Mammary epithelial cell (primary cell): ENCODE measurements at regions of chr12 and their contacts with region 1.

Region 1: GRCh38 chr12:12376646-12377448 is 20.0 kb downstream of the BORCS5 start:
- DNase-seq: peak; percentile 68
- H3K4me3 ChIP-seq: no peak overlapping the region
- H3K27ac ChIP-seq: no peak overlapping the region
- H3K4me1 ChIP-seq: no peaks in the 10 kb centered on the region
- H3K27me3 ChIP-seq: no peaks in the 10 kb centered on the region
- CTCF ChIP-seq: peak; percentile 61 to 67

Region 2: DNA sequence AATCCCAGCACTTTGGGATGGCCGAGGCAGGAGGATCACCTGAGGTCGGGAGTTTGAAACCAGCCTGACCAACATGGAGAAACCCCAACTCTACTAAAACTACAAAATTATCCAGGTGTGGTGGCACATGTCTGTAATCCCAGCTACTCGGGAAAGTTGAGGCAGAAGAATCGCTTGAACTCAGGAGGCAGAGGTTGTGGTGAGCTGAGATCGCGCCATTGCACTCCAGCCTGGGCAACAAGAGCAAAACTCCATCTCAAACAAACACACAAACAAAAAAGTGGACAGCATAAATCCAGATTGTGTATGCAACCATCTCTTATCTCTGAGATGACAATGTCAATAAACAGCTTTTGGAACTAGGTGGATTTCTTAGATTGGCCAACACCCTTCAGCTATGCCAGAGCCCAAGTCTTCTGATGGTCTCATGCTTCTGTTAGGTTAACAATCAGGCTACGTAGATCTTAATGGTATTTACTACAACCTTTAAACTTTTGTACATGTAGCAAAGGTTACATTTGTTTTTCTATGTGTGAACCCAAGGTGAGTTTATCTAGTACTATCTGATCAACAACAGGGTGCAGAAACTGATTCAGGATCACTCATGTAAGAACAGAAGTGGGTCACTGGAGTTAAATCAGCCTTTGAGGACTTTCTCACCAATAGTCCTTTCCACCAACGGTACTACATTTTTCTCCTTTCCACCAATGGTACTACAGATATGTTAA is 112.1 kb after region 1 on chr12:
- CTCF ChIA-PET with region 1: no interaction called
- dilution Hi-C with region 1: no loop called
- in situ Hi-C with region 1: no loop called
- intact Hi-C with region 1: no loop called
- DNase-seq: no peak
- H3K4me3 ChIP-seq: no peak overlapping the region
- H3K27ac ChIP-seq: no peak overlapping the region
- H3K4me1 ChIP-seq: no peaks in the 10 kb centered on the region
- H3K27me3 ChIP-seq: no peaks in the 10 kb centered on the region
- CTCF ChIP-seq: no peak

Region 3: DNA sequence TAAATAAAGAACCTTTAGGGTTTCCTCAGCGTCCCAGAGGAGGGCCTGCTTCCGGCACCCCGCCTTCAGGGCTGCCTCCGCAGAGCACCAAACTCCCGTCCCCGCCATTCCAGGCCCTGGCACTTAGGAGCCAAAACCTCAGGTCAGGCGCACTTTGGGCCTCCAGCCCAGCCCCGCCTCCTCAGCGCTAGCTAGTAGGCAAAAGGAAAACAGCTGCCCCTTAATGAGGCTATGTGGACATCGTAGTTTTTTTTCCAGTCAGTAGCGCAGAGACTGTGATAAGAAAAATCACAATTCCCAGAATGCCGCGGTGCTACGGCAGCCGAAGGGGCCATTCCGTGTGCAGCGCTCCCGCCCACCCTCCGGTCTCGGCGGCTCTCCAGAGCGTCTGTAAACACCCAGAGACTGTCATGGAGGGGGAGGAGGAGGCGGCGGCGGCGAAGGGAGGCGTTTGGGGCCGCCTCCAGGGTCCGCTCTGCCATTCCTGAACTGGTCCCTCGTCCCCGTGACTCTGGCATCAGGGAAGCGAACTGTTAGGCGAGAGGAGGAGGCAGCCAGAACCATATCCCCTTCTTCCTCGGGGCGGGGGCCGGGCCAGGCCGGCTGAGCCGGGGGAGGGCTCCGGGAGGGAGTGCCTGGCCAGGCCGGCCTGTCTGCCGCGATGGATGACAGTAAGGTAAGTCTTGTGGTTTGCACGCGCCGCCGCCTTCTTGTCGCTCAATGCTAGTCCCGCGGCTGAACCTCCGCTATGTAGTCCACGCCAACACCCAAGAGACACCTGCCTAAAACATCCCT is 234.9 kb after region 1 on chr12 and contains the start of gene CREBL2:
- CTCF ChIA-PET with region 1: no interaction called
- dilution Hi-C with region 1: no loop called
- in situ Hi-C with region 1: no loop called
- intact Hi-C with region 1: loop called (anchors 1 kb)
- DNase-seq: peak; percentile 92
- H3K4me3 ChIP-seq: peak within 1 kb of the TSS; percentile 65 to 75 (median 75)
- H3K27ac ChIP-seq: peak within 1 kb of the TSS; percentile 76
- H3K4me1 ChIP-seq: peaks cover 23% of the 10 kb centered on the region
- H3K27me3 ChIP-seq: no peaks in the 10 kb centered on the region
- CTCF ChIP-seq: no peak
- total RNA-seq, gene CREBL2: 18.1 to 40.2 TPM

Region 4: GRCh38 chr12:12696562-12697383 is 319.9 kb after region 1 on chr12:
- CTCF ChIA-PET with region 1: no interaction called
- dilution Hi-C with region 1: no loop called
- in situ Hi-C with region 1: loop called (anchors 10 kb)
- intact Hi-C with region 1: loop called (anchors 2 kb)
- DNase-seq: peak; percentile 78
- H3K4me3 ChIP-seq: peak overlapping the region; percentile 55 to 90 (median 59)
- H3K27ac ChIP-seq: peak overlapping the region; percentile 96
- H3K4me1 ChIP-seq: peaks cover 8% of the 10 kb centered on the region
- H3K27me3 ChIP-seq: no peaks in the 10 kb centered on the region
- CTCF ChIP-seq: no peak